ENCODE measurements at regions of chr6 and their contacts with region 1.

Region 1: DNA sequence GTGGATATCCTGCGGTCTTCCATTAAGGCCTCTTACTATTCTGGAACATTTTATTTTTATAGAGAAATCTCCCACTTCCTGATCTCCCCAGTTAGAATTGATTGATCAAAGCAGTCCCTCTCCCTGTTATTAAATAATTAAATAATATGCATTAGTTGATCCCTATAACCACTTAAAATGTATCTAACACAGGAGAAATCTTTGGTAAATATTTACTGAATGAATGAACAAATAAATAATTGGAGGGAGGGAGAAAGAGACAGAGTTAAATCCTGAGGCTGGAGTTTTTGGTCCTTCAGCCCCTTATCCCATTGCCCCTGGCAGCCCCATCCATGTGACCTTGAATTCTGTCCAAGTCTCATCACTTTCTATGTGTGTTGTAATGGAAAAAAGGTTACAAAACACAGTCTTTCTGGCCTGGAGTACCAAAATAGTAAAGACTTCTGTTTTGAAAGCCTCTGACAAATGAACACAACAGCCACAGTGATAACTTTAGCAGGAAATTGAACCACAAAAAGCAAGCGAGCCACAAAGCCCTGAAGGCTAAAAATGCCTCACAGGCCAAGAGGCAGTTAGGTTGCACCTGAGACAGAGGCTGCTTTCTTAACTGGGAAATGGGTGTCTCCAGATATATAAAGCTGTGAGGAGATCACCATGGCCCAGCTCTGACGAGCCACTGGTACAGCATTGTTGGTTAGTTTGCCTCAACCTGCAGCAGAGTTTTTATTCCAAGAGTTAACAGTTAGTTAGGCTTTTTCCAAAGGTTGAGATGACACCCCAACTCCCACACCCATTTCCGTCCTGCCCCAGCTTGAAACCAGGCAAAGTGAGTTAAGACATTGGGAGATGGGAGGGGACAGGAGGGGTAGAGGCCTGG is 11.3 kb downstream of the NT5E start:
- DNase-seq: peak; percentile 83
- H3K4me3 Mint-ChIP-seq: no peak overlapping the region
- H3K27ac Mint-ChIP-seq: peak overlapping the region; percentile 80
- H3K4me1 Mint-ChIP-seq: peaks cover 91% of the 10 kb centered on the region
- H3K27me3 Mint-ChIP-seq: no peaks in the 10 kb centered on the region
- CTCF ChIP-seq: no peak

Region 2: DNA sequence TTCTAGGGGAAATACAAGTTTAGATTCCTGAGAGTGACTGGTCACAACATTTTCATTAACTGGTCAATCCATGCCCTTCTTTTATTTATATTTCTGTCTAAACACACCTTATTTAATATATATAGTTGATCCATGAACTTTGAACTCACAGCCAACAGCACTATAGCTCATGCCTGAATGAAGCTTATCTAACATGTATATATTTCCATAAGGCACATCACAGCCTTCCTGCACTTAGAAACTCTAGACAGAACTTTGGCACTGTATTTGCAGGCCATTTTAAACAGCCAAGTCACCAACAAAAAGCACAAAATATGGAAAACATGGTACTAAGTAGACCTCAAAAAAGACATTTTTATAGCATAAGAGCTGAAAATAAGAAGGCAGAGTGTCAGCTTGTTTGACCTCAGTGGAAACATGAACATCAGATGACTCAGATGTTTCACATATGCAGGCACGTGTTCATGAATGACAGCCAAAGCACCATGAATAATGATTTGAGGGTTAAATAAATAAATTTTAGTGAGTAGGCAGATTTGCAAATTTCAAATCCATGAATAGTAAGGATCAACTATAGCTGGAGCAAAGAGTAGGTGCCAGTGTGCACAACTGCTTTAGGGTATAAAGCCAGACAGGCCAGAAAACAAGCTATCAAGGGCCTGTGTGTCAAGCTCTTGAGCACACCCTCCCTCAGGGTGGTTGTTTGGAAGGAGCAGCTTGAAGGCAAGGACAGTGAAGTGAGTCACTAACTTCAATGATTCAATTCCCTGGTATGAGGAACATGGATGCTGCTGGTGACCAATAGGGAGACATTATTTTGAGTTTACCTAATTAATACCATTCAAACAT is 100.1 kb before region 1 on chr6:
- CTCF ChIA-PET with region 1: interaction called, 8 read pairs
- POLR2A ChIA-PET with region 1: interaction called, 19 read pairs
- intact Hi-C with region 1: loop called (anchors 1 kb)
- DNase-seq: peak; percentile 94
- H3K4me3 Mint-ChIP-seq: no peak overlapping the region
- H3K27ac Mint-ChIP-seq: peak overlapping the region; percentile 93
- H3K4me1 Mint-ChIP-seq: peaks cover 22% of the 10 kb centered on the region
- H3K27me3 Mint-ChIP-seq: no peaks in the 10 kb centered on the region
- CTCF ChIP-seq: no peak

Region 3: DNA sequence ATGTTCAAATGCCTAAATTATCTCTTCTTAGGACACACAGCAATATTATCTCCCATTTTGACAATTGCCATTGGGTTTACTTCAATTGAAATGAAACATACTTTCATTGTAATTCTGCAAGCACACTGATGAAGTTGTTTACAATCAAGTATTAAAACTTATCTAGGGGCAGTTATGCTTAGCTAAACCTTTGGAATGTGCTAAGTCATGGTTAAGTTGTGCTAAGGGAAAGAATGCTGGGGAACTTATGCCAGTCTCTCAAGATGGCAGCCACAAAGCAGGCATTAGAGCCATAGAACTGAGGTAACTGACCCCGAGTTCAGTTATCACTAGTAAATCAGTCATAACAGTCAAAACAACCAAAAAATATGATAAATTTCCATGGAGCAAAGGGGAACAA is 70.4 kb before region 1 on chr6:
- CTCF ChIA-PET with region 1: no interaction called
- POLR2A ChIA-PET with region 1: no interaction called
- intact Hi-C with region 1: no loop called
- DNase-seq: no peak
- H3K4me3 Mint-ChIP-seq: no peak overlapping the region
- H3K27ac Mint-ChIP-seq: no peak overlapping the region
- H3K4me1 Mint-ChIP-seq: peaks cover 10% of the 10 kb centered on the region
- H3K27me3 Mint-ChIP-seq: no peaks in the 10 kb centered on the region
- CTCF ChIP-seq: no peak

Region 4: DNA sequence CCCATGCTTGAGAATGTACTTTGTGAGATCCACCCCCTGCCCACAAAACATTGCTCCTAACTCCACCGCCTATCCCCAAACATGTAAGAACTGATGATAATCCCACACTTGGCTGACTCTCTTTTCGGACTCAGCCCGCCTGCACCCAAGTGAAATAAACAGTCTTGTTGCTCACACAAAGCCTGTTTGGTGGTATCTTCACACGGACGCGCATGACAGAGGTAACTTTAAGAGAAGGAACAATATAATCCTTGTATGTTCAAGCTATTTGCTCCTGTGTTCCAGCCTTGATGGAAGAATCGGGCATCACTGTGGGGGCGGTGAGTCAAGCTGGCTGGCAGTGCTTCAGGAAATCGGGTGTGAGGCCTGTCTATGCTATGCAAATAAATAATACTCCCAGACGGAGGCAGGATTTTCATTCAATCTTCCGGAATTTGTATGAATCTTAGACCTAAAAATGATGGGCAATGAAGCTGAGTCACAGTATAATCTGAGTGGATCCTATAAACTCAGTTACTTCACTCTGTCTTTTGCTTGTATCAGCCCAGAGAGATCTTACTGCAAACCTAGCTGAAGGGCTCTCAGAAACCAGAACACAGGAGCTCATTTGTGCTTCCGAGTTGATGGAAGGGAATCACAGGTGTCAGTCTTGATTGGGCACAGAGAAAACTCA is 56.5 kb before region 1 on chr6:
- CTCF ChIA-PET with region 1: no interaction called
- POLR2A ChIA-PET with region 1: interaction called, 19 read pairs
- intact Hi-C with region 1: loop called (anchors 1 kb)
- DNase-seq: peak; percentile 92
- H3K4me3 Mint-ChIP-seq: peak overlapping the region; percentile 48
- H3K27ac Mint-ChIP-seq: peak overlapping the region; percentile 93
- H3K4me1 Mint-ChIP-seq: peaks cover 49% of the 10 kb centered on the region
- H3K27me3 Mint-ChIP-seq: no peaks in the 10 kb centered on the region
- CTCF ChIP-seq: no peak

Region 5: DNA sequence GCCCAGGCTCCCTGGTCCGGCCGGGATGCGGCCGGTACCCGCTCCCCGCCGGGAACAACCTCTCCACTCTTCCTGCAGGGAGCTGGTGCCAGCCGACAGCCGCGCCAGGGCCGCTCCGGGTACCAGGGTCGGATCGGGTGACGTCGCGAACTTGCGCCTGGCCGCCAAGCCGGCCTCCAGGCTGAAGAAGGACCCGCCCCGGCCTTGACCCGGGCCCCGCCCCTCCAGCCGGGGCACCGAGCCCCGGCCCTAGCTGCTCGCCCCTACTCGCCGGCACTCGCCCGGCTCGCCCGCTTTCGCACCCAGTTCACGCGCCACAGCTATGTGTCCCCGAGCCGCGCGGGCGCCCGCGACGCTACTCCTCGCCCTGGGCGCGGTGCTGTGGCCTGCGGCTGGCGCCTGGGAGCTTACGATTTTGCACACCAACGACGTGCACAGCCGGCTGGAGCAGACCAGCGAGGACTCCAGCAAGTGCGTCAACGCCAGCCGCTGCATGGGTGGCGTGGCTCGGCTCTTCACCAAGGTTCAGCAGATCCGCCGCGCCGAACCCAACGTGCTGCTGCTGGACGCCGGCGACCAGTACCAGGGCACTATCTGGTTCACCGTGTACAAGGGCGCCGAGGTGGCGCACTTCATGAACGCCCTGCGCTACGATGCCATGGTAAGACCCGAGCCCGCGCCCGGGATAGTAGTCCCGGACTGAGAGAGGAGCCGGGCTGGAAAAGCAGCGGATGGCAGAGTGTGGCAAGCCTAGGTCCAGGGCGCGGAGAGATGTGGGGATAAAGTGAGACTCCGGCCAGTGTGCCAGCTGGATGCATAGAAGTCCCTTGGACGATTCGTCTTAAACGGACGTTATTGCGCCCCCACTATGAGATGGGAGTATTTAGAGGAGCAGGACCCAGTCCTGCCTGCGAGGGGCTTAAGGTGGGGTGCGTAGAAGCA is 11.1 kb before region 1 on chr6 and contains the start of gene NT5E:
- CTCF ChIA-PET with region 1: interaction called, 15 read pairs
- POLR2A ChIA-PET with region 1: interaction called, 107 read pairs
- intact Hi-C with region 1: loop called (anchors 1 kb)
- DNase-seq: peak; percentile 69
- H3K4me3 Mint-ChIP-seq: peak within 1 kb of the TSS; percentile 88
- H3K27ac Mint-ChIP-seq: peak within 1 kb of the TSS; percentile 92
- H3K4me1 Mint-ChIP-seq: peaks cover 47% of the 10 kb centered on the region
- H3K27me3 Mint-ChIP-seq: no peaks in the 10 kb centered on the region
- CTCF ChIP-seq: no peak
- total RNA-seq, gene NT5E: 112 and 121 TPM in 2 replicates

Region 6: DNA sequence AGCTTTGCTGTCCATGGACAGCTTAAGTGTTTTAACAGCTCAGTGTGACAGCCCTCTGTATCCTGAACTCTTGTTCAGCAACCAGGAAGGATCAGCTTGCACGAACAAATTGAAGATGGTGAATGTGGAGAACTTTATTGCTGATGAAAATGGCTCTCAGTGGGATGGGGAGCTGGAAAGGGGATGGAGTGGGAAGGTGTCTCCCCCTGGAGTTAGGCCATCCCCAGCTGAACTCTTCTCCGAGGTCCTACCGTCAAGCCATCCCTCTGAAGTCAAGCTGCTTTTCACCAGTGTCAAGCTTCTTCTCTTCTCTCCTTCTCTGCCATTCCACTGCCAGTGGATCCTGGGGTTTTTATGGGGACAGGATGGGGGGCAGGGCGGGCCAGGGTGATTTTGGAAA is 15.4 kb after region 1 on chr6:
- CTCF ChIA-PET with region 1: interaction called, 12 read pairs
- POLR2A ChIA-PET with region 1: interaction called, 8 read pairs
- intact Hi-C with region 1: no loop called
- DNase-seq: no peak
- H3K4me3 Mint-ChIP-seq: no peak overlapping the region
- H3K27ac Mint-ChIP-seq: no peak overlapping the region
- H3K4me1 Mint-ChIP-seq: peaks cover 4% of the 10 kb centered on the region
- H3K27me3 Mint-ChIP-seq: no peaks in the 10 kb centered on the region
- CTCF ChIP-seq: no peak

Region 7: DNA sequence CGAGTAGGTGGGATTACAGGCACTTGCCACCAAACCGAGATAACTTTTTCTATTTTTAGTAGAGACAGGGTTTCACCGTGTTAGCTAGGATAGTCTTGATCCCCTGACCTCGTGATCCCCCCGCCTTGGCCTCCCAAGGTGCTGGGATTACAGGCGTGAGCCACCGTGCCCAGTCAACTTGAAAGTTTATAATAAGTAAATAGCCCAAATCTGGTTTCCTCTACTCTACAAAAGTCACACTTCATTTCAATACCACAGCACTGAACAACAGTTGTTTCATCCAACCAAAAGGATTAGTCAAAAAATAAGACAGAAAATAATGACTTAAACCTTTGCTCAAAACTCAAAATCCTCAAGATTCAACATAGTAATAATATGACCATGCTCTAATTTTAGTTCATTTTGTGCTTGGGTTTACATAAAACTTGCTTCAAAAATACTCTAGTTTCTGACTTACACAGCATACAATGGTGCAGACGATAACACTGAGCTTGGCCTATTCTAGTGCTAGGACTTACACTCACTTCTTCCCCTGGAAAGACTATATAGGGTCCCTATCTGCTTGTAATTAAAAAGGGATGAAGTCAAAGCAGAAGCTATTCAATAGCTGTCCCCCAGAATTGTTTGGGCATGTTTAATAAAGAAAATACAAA is 45.4 kb after region 1 on chr6:
- CTCF ChIA-PET with region 1: no interaction called
- POLR2A ChIA-PET with region 1: no interaction called
- intact Hi-C with region 1: no loop called
- DNase-seq: no peak
- H3K4me3 Mint-ChIP-seq: no peak overlapping the region
- H3K27ac Mint-ChIP-seq: no peak overlapping the region
- H3K4me1 Mint-ChIP-seq: no peaks in the 10 kb centered on the region
- H3K27me3 Mint-ChIP-seq: no peaks in the 10 kb centered on the region
- CTCF ChIP-seq: no peak

Measured in MCF 10A (cell line).